Naive thymus-derived CD4-positive, alpha-beta T cell (primary cell): ENCODE measurements at regions of chr15 and their contacts with region 1.

Region 1: DNA sequence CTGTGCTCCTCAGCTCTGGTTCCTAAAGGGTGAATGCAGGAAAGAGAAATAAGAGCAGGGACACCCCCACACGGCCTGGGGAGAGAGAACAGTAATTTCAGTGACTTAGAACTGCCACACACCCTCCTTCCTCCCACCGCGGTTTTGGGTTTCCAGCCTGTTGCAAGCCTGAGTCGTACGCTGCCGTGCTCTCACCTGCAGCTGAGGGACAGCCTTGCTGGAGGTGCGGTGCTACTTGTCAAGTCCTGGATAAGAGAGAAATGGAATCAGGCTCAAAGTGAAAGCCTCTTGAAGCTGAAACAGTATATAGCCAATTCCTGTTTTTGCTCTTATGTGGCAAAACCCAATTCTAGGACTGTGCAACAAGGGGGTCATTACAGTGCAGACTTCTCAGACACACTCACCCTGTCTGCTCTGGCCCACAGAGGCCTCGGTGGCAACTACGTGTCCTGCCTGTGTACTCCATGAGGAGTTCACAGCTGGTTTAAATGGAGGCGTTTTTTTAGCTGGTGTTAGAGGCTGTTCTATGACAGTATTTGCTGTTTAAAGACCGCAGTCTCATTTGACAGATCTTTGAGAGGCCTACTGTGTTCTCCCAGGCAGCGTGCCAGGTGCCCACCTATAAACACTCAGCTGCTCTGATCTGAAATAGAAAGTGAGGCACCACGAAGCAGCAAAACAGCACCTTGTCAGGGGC is 42.9 kb downstream of the TBC1D2B start:
- DNase-seq: peak; percentile 33 to 78 (median 75)
- ATAC-seq: peak; percentile 87
- H3K4me3 ChIP-seq: peak overlapping the region; percentile 21
- H3K4me3 Mint-ChIP-seq: peak overlapping the region; percentile 56 to 82 (median 77)
- H3K27ac ChIP-seq: peak overlapping the region; percentile 42
- H3K27ac Mint-ChIP-seq: peak overlapping the region; percentile 71 to 97 (median 92)
- H3K4me1 ChIP-seq: peaks cover 60% of the 10 kb centered on the region in 2 donors
- H3K4me1 Mint-ChIP-seq: peaks cover 65 to 84% (median 76%) of the 10 kb centered on the region in 7 donors
- H3K27me3 ChIP-seq: no peaks in the 10 kb centered on the region
- H3K27me3 Mint-ChIP-seq: no peaks in the 10 kb centered on the region

Region 2: GRCh38 chr15:77352887-77353286 is 681.8 kb before region 1 on chr15:
- CTCF ChIA-PET with region 1: no interaction called
- POLR2A ChIA-PET with region 1: no interaction called
- intact Hi-C with region 1: no loop called
- DNase-seq: no peak
- ATAC-seq: no peak
- H3K4me3 ChIP-seq: no peak overlapping the region
- H3K4me3 Mint-ChIP-seq: no peak overlapping the region
- H3K27ac ChIP-seq: no peak overlapping the region
- H3K27ac Mint-ChIP-seq: no peak overlapping the region
- H3K4me1 ChIP-seq: no peaks in the 10 kb centered on the region
- H3K4me1 Mint-ChIP-seq: peaks cover 0 to 6% (median 0%) of the 10 kb centered on the region in 7 donors
- H3K27me3 ChIP-seq: no peaks in the 10 kb centered on the region
- H3K27me3 Mint-ChIP-seq: no peaks in the 10 kb centered on the region

Region 3: GRCh38 chr15:78049691-78050440 is 15.2 kb after region 1 on chr15:
- CTCF ChIA-PET with region 1: interaction called, 11 read pairs
- POLR2A ChIA-PET with region 1: interaction called, 38 read pairs
- intact Hi-C with region 1: loop called (anchors 1 to 2 kb)
- DNase-seq: peak in 4 of 9 donors; percentile 34 to 63 (median 41)
- ATAC-seq: peak; percentile 61
- H3K4me3 ChIP-seq: peak overlapping the region; percentile 31
- H3K4me3 Mint-ChIP-seq: peak overlapping the region; percentile 59 to 84 (median 67)
- H3K27ac ChIP-seq: peak overlapping the region; percentile 70
- H3K27ac Mint-ChIP-seq: peak overlapping the region; percentile 82 to 98 (median 92)
- H3K4me1 ChIP-seq: peaks cover 75 to 100% of the 10 kb centered on the region in 2 donors
- H3K4me1 Mint-ChIP-seq: peaks cover 70 to 100% (median 94%) of the 10 kb centered on the region in 7 donors
- H3K27me3 ChIP-seq: no peaks in the 10 kb centered on the region
- H3K27me3 Mint-ChIP-seq: no peaks in the 10 kb centered on the region

Region 4: DNA sequence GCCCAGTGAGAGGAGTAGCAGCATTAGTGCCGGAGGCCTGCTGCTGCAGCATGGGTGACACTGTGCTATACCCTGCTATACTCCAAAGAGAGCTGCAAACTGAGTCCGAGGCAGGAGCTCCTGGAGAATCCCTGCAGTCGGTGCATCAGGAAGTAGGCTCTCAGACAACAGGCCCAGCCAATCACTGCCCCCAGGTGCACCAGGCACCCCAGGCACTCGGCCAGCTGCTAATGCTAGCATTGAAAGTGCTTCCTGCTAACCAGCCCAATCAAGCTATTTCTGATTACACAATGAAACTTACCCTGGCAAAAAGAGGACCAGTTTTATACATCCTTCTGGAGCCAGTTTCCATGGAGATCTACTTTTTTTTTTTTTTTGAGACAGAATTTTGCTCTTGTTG is 357.8 kb after region 1 on chr15:
- CTCF ChIA-PET with region 1: no interaction called
- POLR2A ChIA-PET with region 1: no interaction called
- intact Hi-C with region 1: no loop called
- DNase-seq: no peak
- ATAC-seq: no peak
- H3K4me3 ChIP-seq: no peak overlapping the region
- H3K4me3 Mint-ChIP-seq: no peak overlapping the region
- H3K27ac ChIP-seq: no peak overlapping the region
- H3K27ac Mint-ChIP-seq: no peak overlapping the region
- H3K4me1 ChIP-seq: no peaks in the 10 kb centered on the region
- H3K4me1 Mint-ChIP-seq: peaks cover 0 to 1% (median 0%) of the 10 kb centered on the region in 7 donors
- H3K27me3 ChIP-seq: no peaks in the 10 kb centered on the region
- H3K27me3 Mint-ChIP-seq: peaks cover 4 to 9% (median 6%) of the 10 kb centered on the region in 5 donors